ENCODE measurements at regions of chr3 and their contacts with region 1.

Region 1: DNA sequence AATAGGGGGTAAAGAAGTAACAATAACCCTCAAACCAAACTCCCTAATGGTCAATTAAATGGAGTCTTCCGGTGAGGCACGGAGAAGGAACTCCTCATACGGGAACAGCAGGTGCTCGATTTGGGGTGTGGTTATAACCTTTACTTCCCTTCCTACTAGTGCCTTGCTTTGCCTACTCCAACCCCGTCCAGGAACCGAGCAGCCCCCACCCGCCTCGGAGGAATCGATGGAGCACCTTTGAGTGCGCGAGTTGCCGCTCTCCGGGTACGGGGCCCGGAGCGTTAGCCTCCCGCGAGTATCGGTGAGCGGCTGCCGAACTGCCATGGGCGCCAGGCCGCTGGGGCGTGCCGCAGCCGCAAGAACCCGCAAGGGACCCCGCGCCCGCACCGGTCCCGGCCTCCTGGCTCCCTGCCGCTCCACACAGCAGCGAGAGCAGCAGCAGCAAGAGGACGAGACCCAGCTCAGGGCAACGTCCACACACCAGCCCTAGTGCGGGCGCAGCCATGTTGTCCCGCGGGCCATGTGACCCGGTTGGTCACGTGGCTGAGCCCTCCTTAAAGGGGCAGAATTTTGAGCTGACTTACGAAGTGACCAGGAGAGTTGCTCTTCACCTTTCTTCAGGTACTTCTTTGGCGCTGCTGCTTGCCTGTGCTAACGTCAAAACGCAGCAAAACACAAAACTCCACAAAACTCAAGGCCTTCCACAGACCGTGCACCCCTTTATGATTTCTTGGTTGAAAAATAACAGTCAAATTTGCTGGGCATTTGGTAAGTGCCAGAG is at the start of gene SUMF1:
- DNase-seq: peak; percentile 80
- ATAC-seq: peak; percentile 90
- H3K4me3 ChIP-seq: peak within 1 kb of the TSS; percentile 80 to 90 (median 86)
- H3K4me3 Mint-ChIP-seq: peak within 1 kb of the TSS; percentile 97
- H3K27ac ChIP-seq: peak within 1 kb of the TSS; percentile 72 to 92
- H3K27ac Mint-ChIP-seq: peak within 1 kb of the TSS; percentile 95
- H3K4me1 ChIP-seq: peaks cover 9 to 11% of the 10 kb centered on the region in 2 donors
- H3K4me1 Mint-ChIP-seq: peaks cover 18% of the 10 kb centered on the region
- H3K27me3 ChIP-seq: no peaks in the 10 kb centered on the region
- H3K27me3 Mint-ChIP-seq: no peaks in the 10 kb centered on the region
- CTCF ChIP-seq: no peak
- total RNA-seq, gene SUMF1: 21.2 and 24.0 TPM in 2 replicates

Region 2: GRCh38 chr3:4633078-4634004 is 166.4 kb after region 1 on chr3:
- CTCF ChIA-PET with region 1: no interaction called
- POLR2A ChIA-PET with region 1: no interaction called
- intact Hi-C with region 1: loop called (anchors 2 kb)
- DNase-seq: peak; percentile 64
- ATAC-seq: peak; percentile 43
- H3K4me3 ChIP-seq: no peak overlapping the region
- H3K4me3 Mint-ChIP-seq: no peak overlapping the region
- H3K27ac ChIP-seq: peak overlapping the region in 1 of 2 donors; percentile 26
- H3K27ac Mint-ChIP-seq: peak overlapping the region; percentile 78
- H3K4me1 ChIP-seq: no peaks in the 10 kb centered on the region
- H3K4me1 Mint-ChIP-seq: peaks cover 13% of the 10 kb centered on the region
- H3K27me3 ChIP-seq: no peaks in the 10 kb centered on the region
- H3K27me3 Mint-ChIP-seq: no peaks in the 10 kb centered on the region
- CTCF ChIP-seq: peak; percentile 91

Measured in B cell (primary cell).